Posterior vena cava (tissue), 2 donors: ENCODE measurements at regions of chr16 and their contacts with region 1.

Region 1: GRCh38 chr16:51696376-51696775 is 545.3 kb upstream of the SALL1 start:
- DNase-seq: no peak

Region 2: DNA sequence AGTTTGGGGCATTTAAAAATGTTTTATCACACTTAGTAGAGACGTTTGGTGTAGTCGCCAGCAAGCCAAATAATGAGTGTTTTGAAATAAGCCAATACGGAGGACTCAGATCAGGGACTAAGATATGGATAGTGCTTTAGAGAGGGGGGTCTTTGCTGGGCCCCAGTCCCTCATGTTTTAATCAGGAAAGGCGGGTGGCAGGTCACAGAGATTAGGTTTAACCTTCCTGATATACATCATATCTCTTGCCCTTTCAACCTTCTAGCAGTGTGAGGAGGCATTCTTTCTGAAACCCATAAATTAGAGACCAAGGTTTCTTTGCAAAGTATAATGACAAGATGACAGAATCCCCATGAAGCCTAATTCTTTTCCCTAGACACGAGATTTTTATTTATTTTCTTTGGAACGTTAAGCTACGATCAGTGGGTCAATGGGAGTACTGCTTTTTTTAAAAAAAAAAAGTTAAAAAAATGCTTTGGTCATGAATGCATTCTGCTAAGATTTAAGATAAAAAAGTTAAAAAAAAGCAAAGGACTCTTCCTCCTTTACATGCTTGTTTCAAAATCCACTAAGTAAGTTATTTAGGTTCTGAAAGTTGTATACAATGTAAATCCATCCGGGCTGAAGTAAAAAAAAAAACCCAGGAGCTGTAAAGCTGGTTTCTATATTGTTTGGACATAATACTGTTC is 26.8 kb after region 1 on chr16:
- intact Hi-C with region 1: loop called in 1 of 2 experiments (anchors 1 kb)
- DNase-seq: no peak